Lower lobe of right lung (tissue), 2 donors: ENCODE measurements at regions of chr20 and their contacts with region 1.

Region 1: DNA sequence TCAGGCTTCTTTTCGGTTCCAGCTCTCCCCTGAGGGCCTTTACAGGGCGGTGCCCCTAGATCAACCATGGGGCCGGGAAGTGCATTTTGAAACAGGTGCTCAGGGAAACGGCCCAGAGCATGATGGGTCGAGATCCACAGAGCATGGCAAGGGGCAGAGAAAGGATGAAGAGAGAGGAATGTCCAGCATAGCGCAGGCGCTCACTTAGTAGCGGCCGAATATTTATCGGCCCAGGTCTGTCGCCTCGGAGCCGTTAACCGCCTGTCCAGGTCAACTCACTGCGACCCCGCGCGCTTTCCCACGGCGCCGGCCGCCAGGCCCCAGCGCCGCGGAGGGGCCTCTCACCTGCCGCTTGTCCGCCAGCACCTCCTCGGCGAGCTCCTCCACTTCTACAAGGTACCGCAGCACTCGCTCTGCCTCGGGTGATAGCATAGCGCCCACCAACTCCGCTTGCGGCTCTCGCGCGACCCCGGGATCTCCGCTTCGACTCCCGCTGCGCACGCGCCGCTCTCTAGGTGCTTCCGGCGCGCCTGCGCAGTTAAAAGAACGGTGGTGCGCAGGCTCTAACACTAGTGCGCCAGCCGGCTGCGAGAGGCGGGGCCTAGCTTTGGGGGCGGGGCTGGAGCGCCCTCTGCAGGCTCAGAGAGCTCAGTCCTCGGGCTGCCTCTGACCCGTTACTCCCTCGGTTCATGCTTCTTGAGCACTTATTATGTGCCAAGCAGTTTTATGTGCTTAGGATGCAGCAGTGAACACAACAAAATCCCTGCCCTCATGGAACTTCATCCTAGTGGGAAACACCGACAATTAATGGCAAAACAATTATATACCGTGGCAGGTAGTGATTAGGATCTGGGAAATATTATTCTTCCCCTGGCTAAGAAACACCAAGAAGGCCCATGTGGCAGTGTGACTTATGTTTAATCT is at the start of gene PDRG1:
- DNase-seq: peak; percentile 97
- ATAC-seq: peak; percentile 99 to 100
- H3K4me3 ChIP-seq: peak within 1 kb of the TSS; percentile 99
- H3K27ac ChIP-seq: peak within 1 kb of the TSS; percentile 87
- H3K4me1 ChIP-seq: peaks cover 16% of the 10 kb centered on the region
- H3K27me3 ChIP-seq: peaks cover 5% of the 10 kb centered on the region
- CTCF ChIP-seq: peak; percentile 95
- total RNA-seq, gene PDRG1: 9.4 TPM

Region 2: DNA sequence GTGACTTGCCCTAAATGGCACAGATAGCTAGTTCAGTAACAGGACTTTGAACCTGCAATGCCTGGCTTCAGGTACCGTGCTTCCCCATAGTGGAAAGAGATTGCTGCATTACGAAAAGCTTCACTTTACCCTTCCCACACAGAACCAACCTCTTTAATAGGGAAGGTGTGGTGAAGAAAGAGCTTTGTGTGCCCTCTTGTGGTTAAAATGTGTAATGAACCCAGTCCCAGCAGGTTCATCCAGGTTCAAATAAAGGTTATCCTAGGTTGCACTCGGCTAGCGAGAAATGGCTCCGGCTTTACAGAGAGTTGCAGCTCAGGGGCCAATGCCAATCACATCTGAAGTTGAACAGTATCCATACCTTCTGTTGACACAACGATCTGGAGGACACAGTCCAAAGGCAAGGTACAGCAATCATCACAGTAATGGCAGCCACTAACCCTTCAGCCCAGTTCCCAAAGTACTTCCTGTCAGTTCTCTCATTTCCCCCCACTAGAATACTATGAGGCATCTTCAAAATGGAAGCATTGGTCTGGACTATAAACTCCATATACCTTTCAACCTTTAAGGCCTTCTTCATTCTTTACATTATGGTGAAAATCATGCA is 691.4 kb before region 1 on chr20:
- intact Hi-C with region 1: no loop called
- DNase-seq: no peak
- ATAC-seq: no peak
- H3K4me3 ChIP-seq: no peak overlapping the region
- H3K27ac ChIP-seq: no peak overlapping the region
- H3K4me1 ChIP-seq: no peaks in the 10 kb centered on the region
- H3K27me3 ChIP-seq: no peaks in the 10 kb centered on the region
- CTCF ChIP-seq: peak; percentile 41

Region 3: DNA sequence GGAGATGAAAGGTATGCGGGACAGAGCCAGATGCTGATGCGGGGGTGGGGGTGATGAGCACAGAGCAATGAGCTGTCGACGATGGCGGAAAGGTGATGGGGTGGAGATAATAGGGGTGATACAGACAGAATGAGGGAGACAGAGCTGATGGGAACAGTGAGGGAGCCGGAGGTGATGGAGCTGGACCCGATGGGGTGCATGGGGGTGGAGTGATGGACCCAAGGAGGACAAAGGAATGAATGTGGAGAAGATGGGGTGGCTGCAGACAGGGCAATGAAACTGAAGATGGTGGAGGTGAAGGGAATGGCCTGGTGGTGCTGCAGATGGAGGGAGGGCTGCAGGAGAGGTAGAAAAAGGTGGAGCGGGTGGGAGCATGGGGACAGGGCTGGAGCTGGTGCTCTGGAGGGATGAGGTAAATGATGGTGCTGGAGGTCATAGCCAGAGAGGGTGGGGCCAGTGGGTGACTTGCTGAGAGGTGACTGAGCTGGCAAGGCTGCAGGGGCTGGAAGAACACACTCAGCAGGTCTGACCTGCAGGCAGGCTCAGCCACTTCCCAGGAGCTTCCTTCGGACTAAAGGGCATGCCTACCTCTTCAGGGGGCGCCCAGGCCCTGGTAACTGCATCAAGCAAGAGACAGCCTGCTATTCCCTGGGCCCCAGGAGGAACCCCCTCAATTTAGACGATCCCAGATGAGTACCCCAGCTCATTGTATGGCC is 100.4 kb before region 1 on chr20:
- intact Hi-C with region 1: loop called (anchors 5 kb)
- DNase-seq: no peak
- ATAC-seq: no peak
- H3K4me3 ChIP-seq: no peak overlapping the region
- H3K27ac ChIP-seq: no peak overlapping the region
- H3K4me1 ChIP-seq: no peaks in the 10 kb centered on the region
- H3K27me3 ChIP-seq: peaks cover 36% of the 10 kb centered on the region
- CTCF ChIP-seq: no peak